Naive thymus-derived CD4-positive, alpha-beta T cell (primary cell): ENCODE measurements at regions of chr4 and their contacts with region 1.

Region 1: GRCh38 chr4:6640292-6641163 is at the start of gene MRFAP1:
- DNase-seq: peak; percentile 84 to 97 (median 95)
- ATAC-seq: peak; percentile 94
- H3K4me3 ChIP-seq: peak within 1 kb of the TSS; percentile 100
- H3K4me3 Mint-ChIP-seq: peak within 1 kb of the TSS; percentile 94 to 100 (median 99)
- H3K27ac ChIP-seq: peak within 1 kb of the TSS; percentile 97
- H3K27ac Mint-ChIP-seq: peak within 1 kb of the TSS; percentile 99 to 100 (median 99)
- H3K4me1 ChIP-seq: peaks cover 13 to 23% of the 10 kb centered on the region in 2 donors
- H3K4me1 Mint-ChIP-seq: peaks cover 26 to 52% (median 37%) of the 10 kb centered on the region in 7 donors
- H3K27me3 ChIP-seq: no peaks in the 10 kb centered on the region
- H3K27me3 Mint-ChIP-seq: no peaks in the 10 kb centered on the region
- total RNA-seq, gene MRFAP1: 120 to 187 (median 139) TPM

Region 2: GRCh38 chr4:6269616-6270511 is 370.7 kb before region 1 on chr4 and contains the start of gene WFS1:
- CTCF ChIA-PET with region 1: no interaction called
- POLR2A ChIA-PET with region 1: no interaction called
- intact Hi-C with region 1: loop called in 1 of 2 experiments (anchors 2 kb)
- DNase-seq: peak; percentile 91 to 97 (median 95)
- ATAC-seq: peak; percentile 100
- H3K4me3 ChIP-seq: peak within 1 kb of the TSS; percentile 82
- H3K4me3 Mint-ChIP-seq: peak within 1 kb of the TSS; percentile 85 to 92 (median 90)
- H3K27ac ChIP-seq: peak within 1 kb of the TSS; percentile 67
- H3K27ac Mint-ChIP-seq: peak within 1 kb of the TSS; percentile 24 to 84 (median 65)
- H3K4me1 ChIP-seq: peaks cover 8% of the 10 kb centered on the region in 2 donors
- H3K4me1 Mint-ChIP-seq: peaks cover 19 to 31% (median 25%) of the 10 kb centered on the region in 7 donors
- H3K27me3 ChIP-seq: no peaks in the 10 kb centered on the region
- H3K27me3 Mint-ChIP-seq: peaks cover 0 to 44% (median 3%) of the 10 kb centered on the region in 5 donors
- total RNA-seq, gene WFS1: 2.8 to 6.7 (median 4.4) TPM

Region 3: DNA sequence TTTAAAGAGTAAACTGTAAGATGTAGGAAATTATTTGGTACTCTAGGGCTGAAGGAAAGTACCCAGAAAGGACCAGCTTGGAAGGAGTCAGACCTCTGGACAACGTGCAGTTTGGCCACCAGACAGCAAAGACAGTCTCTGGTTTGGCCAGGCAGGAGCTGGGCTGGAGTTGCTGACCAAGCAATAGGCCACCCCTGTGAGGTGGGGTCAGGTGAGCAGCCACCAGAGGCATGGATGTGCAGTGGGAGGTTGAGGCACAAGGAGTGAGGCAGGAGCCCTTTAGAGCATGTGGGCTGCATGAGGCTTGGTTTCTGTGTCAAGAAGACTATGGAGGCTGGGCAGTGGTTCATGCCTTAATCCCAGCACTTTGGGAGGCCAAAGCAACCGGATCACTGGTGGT is 17.8 kb before region 1 on chr4:
- CTCF ChIA-PET with region 1: no interaction called
- POLR2A ChIA-PET with region 1: interaction called, 5 read pairs
- intact Hi-C with region 1: loop called in 1 of 2 experiments (anchors 1 kb)
- DNase-seq: no peak
- ATAC-seq: no peak
- H3K4me3 ChIP-seq: no peak overlapping the region
- H3K4me3 Mint-ChIP-seq: no peak overlapping the region
- H3K27ac ChIP-seq: no peak overlapping the region
- H3K27ac Mint-ChIP-seq: no peak overlapping the region
- H3K4me1 ChIP-seq: no peaks in the 10 kb centered on the region
- H3K4me1 Mint-ChIP-seq: no peaks in the 10 kb centered on the region
- H3K27me3 ChIP-seq: no peaks in the 10 kb centered on the region
- H3K27me3 Mint-ChIP-seq: no peaks in the 10 kb centered on the region

Region 4: DNA sequence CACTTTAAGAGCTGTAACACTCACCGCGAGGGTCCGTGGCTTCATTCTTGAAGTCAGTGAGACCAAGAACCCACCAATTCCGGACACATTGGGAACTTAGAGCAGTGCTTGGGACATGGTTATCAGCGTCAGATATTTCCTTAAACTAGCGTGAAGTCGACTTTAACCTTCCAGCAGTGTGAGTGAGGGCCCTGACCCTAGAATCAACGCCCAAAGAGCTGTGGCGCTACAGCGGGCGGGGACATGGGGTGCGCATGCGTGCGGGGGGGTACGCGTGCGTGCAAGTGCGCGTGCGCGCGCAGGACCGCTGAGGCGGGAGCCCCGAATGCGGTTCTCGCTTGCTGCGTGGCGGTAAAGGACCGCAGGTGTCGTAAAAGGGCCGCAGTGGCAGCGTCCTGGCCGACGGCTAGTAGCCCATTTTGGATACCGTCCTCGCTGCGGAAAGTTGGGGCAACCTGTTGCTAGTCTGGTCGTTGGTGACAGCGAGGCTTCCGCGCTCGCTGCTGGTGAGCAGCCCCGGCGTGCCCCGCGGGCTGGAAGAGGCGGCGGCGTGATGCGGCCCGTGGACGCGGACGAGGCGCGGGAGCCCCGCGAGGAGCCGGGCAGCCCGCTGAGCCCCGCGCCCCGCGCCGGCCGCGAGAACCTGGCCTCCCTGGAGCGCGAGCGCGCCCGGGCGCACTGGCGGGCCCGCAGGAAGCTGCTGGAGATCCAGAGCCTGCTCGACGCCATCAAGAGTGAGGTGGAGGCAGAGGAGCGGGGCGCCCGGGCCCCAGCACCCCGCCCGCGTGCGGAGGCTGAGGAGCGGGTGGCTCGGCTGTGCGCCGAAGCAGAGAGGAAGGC is 33.4 kb after region 1 on chr4:
- CTCF ChIA-PET with region 1: interaction called, 5 read pairs
- POLR2A ChIA-PET with region 1: interaction called, 156 read pairs
- intact Hi-C with region 1: loop called (anchors 1 kb)
- DNase-seq: peak; percentile 89 to 97 (median 95)
- ATAC-seq: peak; percentile 93
- H3K4me3 ChIP-seq: peak overlapping the region; percentile 74
- H3K4me3 Mint-ChIP-seq: peak overlapping the region; percentile 90 to 100 (median 98)
- H3K27ac ChIP-seq: peak overlapping the region; percentile 83
- H3K27ac Mint-ChIP-seq: peak overlapping the region; percentile 88 to 100 (median 98)
- H3K4me1 ChIP-seq: peaks cover 30 to 34% of the 10 kb centered on the region in 2 donors
- H3K4me1 Mint-ChIP-seq: peaks cover 33 to 53% (median 50%) of the 10 kb centered on the region in 7 donors
- H3K27me3 ChIP-seq: no peaks in the 10 kb centered on the region
- H3K27me3 Mint-ChIP-seq: peaks cover 0 to 3% (median 0%) of the 10 kb centered on the region in 5 donors

Region 5: GRCh38 chr4:6709230-6710114 is 68.9 kb after region 1 on chr4 and contains the start of gene MRFAP1L1:
- CTCF ChIA-PET with region 1: interaction called, 7 read pairs
- POLR2A ChIA-PET with region 1: interaction called, 99 read pairs
- intact Hi-C with region 1: loop called (anchors 1 kb)
- DNase-seq: peak; percentile 91 to 98 (median 97)
- ATAC-seq: peak; percentile 99
- H3K4me3 ChIP-seq: peak within 1 kb of the TSS; percentile 93
- H3K4me3 Mint-ChIP-seq: peak within 1 kb of the TSS; percentile 96 to 100 (median 98)
- H3K27ac ChIP-seq: peak within 1 kb of the TSS; percentile 86
- H3K27ac Mint-ChIP-seq: peak within 1 kb of the TSS; percentile 95 to 99 (median 98)
- H3K4me1 ChIP-seq: peaks cover 38 to 48% of the 10 kb centered on the region in 2 donors
- H3K4me1 Mint-ChIP-seq: peaks cover 45 to 71% (median 65%) of the 10 kb centered on the region in 7 donors
- H3K27me3 ChIP-seq: no peaks in the 10 kb centered on the region
- H3K27me3 Mint-ChIP-seq: peaks cover 0 to 8% (median 0%) of the 10 kb centered on the region in 5 donors
- total RNA-seq, gene MRFAP1L1: 24.8 to 124 (median 73.6) TPM

Region 6: GRCh38 chr4:6742989-6743388 is 102.5 kb after region 1 on chr4:
- CTCF ChIA-PET with region 1: no interaction called
- POLR2A ChIA-PET with region 1: no interaction called
- intact Hi-C with region 1: no loop called
- DNase-seq: no peak
- ATAC-seq: no peak
- H3K4me3 ChIP-seq: no peak overlapping the region
- H3K4me3 Mint-ChIP-seq: no peak overlapping the region
- H3K27ac ChIP-seq: no peak overlapping the region
- H3K27ac Mint-ChIP-seq: no peak overlapping the region
- H3K4me1 ChIP-seq: no peaks in the 10 kb centered on the region
- H3K4me1 Mint-ChIP-seq: peaks cover 0 to 6% (median 0%) of the 10 kb centered on the region in 7 donors
- H3K27me3 ChIP-seq: no peaks in the 10 kb centered on the region
- H3K27me3 Mint-ChIP-seq: peaks cover 0 to 8% (median 0%) of the 10 kb centered on the region in 5 donors

Region 7: GRCh38 chr4:6986781-6987587 is 346.5 kb after region 1 on chr4:
- CTCF ChIA-PET with region 1: no interaction called
- POLR2A ChIA-PET with region 1: interaction called, 7 read pairs
- intact Hi-C with region 1: loop called (anchors 1 kb)
- DNase-seq: peak; percentile 87 to 95 (median 92)
- ATAC-seq: peak; percentile 98
- H3K4me3 ChIP-seq: peak overlapping the region; percentile 82
- H3K4me3 Mint-ChIP-seq: peak overlapping the region; percentile 94 to 100 (median 97)
- H3K27ac ChIP-seq: peak overlapping the region; percentile 86
- H3K27ac Mint-ChIP-seq: peak overlapping the region; percentile 89 to 99 (median 98)
- H3K4me1 ChIP-seq: peaks cover 29 to 37% of the 10 kb centered on the region in 2 donors
- H3K4me1 Mint-ChIP-seq: peaks cover 57 to 93% (median 84%) of the 10 kb centered on the region in 7 donors
- H3K27me3 ChIP-seq: no peaks in the 10 kb centered on the region
- H3K27me3 Mint-ChIP-seq: no peaks in the 10 kb centered on the region